Activated T-helper 2 cell treated with anti-CD3 and anti-CD28 coated beads, Interferon-gamma antibody, Interleukin-2, Interleukin-4, amounts not matched to agents 10 μg/mL and 5 μg/mL and 100 μg/mL, durations not matched to agents 14 hours and 24 hours and 36 hours (primary cell): ENCODE measurements at regions of chr17 and their contacts with region 1.

Region 1: DNA sequence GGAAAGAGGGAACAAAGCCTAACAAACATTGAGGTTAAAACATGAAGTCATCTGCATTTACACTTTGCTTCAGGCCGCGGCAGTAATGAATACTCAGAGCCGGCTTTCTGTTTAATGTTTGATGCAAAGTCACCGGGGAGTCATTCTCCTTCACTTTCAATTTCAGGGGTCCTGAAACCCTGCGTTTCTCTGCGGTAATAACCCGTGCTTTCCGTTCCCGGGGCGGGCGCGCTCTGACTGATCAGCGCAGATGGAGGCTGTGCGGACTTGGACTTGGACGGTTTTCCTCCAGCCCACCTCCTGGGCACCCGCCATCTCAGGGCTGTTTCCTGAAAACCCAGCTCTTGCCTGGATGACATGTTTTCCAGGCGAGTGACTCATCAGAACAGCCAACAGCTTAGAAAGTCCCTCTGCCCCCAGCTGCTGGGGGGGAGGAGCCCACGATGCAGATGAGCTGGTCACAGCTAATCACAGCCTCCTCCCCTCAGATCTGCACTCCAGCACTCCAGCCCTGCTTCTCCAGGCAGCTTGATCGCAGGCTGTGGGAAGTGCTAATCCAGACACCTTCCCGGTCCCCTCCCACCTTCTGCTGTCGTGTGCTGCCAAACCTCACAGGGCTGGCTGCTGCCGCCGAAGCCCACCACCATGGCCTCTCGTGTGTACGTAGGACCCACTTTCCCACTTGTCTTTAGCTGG is 158.6 kb upstream of the CHMP6 start:
- DNase-seq: peak; percentile 83
- H3K4me3 Mint-ChIP-seq: peak overlapping the region; percentile 77
- H3K27ac Mint-ChIP-seq: peak overlapping the region; percentile 94
- H3K4me1 Mint-ChIP-seq: peaks cover 47% of the 10 kb centered on the region
- H3K27me3 Mint-ChIP-seq: no peaks in the 10 kb centered on the region

Region 2: GRCh38 chr17:80847496-80848230 is 14.6 kb after region 1 on chr17:
- intact Hi-C with region 1: loop called (anchors 1 kb)
- DNase-seq: peak; percentile 76
- H3K4me3 Mint-ChIP-seq: peak overlapping the region; percentile 46
- H3K27ac Mint-ChIP-seq: peak overlapping the region; percentile 90
- H3K4me1 Mint-ChIP-seq: peaks cover 56% of the 10 kb centered on the region
- H3K27me3 Mint-ChIP-seq: no peaks in the 10 kb centered on the region

Region 3: DNA sequence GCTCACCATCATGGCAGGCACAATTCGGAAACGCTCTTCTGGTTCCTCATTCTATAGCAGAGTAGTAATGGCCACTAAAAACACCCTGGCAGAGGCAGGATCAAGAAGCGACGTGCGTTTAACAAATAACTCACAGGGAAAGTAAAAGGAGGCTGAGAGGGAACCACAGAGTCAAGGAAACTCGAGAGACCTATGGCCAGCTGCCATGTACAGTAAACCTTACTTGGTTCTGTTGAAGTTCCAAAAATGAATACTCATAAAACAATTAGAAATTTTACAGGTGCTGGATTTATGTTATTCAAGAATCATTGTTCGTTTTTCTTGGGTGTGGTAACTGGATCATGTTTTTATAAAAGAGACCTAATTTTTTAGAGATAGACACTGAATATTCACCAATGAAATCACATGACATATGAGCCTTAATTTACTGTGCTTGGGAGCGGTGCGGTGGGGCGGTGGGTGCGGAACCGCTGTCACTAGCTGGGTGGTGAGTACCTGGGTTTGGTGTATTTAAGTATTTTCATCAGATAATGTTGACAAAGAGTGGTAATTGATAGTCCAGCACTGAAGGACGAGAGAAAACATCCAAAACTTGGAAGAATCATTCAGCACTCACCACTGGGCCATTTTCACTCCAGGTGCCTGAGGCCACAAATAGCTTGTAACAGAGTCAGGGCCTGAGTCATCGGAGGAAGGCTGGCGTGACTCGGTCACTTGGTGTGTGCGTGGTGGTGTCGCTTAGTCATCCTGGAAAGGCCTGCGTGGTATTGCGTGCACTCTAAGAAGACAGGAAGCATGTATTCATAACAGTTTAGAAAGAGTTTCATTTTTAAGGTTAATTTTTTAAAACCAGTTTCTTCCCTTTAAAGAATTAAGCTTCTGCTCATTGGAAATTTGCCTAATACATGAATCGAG is 23.2 kb after region 1 on chr17:
- intact Hi-C with region 1: loop called (anchors 1 kb)
- DNase-seq: peak; percentile 88
- H3K4me3 Mint-ChIP-seq: peak overlapping the region; percentile 37
- H3K27ac Mint-ChIP-seq: peak overlapping the region; percentile 97
- H3K4me1 Mint-ChIP-seq: peaks cover 69% of the 10 kb centered on the region
- H3K27me3 Mint-ChIP-seq: no peaks in the 10 kb centered on the region